ENCODE measurements at regions of chr22 and their contacts with region 1.

Region 1: GRCh38 chr22:46762238-46763050 is at the start of gene TBC1D22A:
- DNase-seq: peak; percentile 88 to 95 (median 92)
- H3K4me3 ChIP-seq: peak within 1 kb of the TSS; percentile 98
- H3K4me3 Mint-ChIP-seq: peak within 1 kb of the TSS; percentile 96 to 100 (median 99)
- H3K27ac ChIP-seq: peak within 1 kb of the TSS; percentile 99
- H3K27ac Mint-ChIP-seq: peak within 1 kb of the TSS; percentile 99 to 100 (median 100)
- H3K4me1 ChIP-seq: peaks cover 43% of the 10 kb centered on the region
- H3K4me1 Mint-ChIP-seq: peaks cover 48 to 73% (median 65%) of the 10 kb centered on the region in 3 donors
- H3K27me3 ChIP-seq: no peaks in the 10 kb centered on the region
- H3K27me3 Mint-ChIP-seq: no peaks in the 10 kb centered on the region
- total RNA-seq, gene TBC1D22A: 34.0 to 34.8 TPM

Region 2: DNA sequence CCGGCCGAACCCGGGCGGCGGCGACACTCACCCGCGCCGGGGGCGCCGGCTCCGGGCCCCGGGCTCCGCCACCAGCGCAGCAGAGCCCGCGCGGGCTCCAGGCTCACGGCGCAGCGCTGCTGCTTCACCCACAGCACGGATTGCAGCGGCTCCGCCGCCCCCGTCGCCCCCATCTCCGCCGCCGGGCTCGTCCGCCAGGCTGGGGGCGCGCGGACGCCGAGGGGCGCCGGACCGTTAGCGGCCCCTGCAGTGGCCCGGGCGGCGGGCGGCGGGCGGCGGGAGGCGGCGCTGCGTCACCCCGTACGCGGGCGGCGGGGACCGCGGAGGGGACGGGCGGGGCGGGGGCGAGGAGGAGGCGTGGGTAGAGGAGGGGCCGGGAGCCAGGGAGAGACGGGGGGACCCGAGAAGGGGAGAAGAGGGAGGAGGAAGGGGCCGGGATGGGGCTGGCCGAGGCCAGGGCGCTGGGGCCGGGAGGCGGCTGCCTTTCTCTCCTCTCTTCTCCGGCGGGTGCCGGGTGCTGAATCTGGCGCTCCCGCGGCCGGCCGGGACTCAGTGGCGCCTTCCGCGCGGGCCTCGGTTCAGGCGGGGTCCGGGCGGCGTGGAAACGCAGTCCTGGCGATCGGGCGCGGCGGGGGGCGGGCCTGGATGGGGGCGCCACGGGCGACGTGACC is 24.3 kb before region 1 on chr22 and contains the start of gene CERK:
- CTCF ChIA-PET with region 1: interaction called, 11 read pairs
- POLR2A ChIA-PET with region 1: interaction called, 20 read pairs
- DNase-seq: peak; percentile 58 to 75 (median 67)
- H3K4me3 ChIP-seq: peak within 1 kb of the TSS; percentile 76
- H3K4me3 Mint-ChIP-seq: peak within 1 kb of the TSS; percentile 95 to 100 (median 99)
- H3K27ac ChIP-seq: peak within 1 kb of the TSS; percentile 76
- H3K27ac Mint-ChIP-seq: peak within 1 kb of the TSS; percentile 97 to 100 (median 100)
- H3K4me1 ChIP-seq: peaks cover 43% of the 10 kb centered on the region
- H3K4me1 Mint-ChIP-seq: peaks cover 36 to 46% (median 37%) of the 10 kb centered on the region in 3 donors
- H3K27me3 ChIP-seq: no peaks in the 10 kb centered on the region
- H3K27me3 Mint-ChIP-seq: peaks cover 0 to 5% of the 10 kb centered on the region in 2 donors
- total RNA-seq, gene CERK: 64.3 to 64.5 TPM

Region 3: GRCh38 chr22:46748908-46749675 is 13.4 kb before region 1 on chr22:
- CTCF ChIA-PET with region 1: interaction called, 24 read pairs
- POLR2A ChIA-PET with region 1: interaction called, 23 read pairs
- DNase-seq: peak; percentile 45 to 83 (median 59)
- H3K4me3 ChIP-seq: peak overlapping the region; percentile 52
- H3K4me3 Mint-ChIP-seq: peak overlapping the region; percentile 32 to 86 (median 80)
- H3K27ac ChIP-seq: peak overlapping the region; percentile 36
- H3K27ac Mint-ChIP-seq: peak overlapping the region; percentile 94 to 98 (median 96)
- H3K4me1 ChIP-seq: peaks cover 27% of the 10 kb centered on the region
- H3K4me1 Mint-ChIP-seq: peaks cover 21 to 33% (median 26%) of the 10 kb centered on the region in 3 donors
- H3K27me3 ChIP-seq: no peaks in the 10 kb centered on the region
- H3K27me3 Mint-ChIP-seq: no peaks in the 10 kb centered on the region

Region 4: DNA sequence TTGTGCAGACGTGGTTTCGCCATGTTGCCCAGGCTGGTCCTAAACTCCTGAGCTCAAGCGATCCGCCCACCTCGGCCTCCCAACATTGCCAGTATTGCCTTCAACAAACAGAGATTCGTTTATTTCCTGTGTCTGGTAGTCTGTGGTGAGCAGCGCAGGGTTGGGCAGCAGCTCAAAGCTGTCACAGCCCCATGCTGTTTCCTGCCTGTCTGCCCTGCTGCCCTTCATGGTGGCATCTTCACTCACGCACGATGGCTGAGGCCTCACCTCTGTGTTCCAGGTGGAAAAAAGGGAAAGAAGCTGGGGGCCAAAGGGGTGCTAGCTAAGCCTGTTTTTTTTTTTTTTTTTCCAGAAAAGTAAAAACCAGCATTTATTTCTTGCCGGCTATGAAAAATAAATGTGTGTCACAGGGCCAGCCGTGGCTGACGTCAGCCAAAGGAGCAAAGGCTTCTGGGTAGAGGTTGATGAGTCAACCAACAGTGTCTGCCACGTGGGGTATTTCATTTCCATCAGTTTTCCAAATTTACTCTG is 28.8 kb after region 1 on chr22:
- CTCF ChIA-PET with region 1: interaction called, 38 read pairs
- POLR2A ChIA-PET with region 1: interaction called, 46 read pairs
- DNase-seq: peak; percentile 76 to 92 (median 89)
- H3K4me3 ChIP-seq: peak overlapping the region; percentile 33
- H3K4me3 Mint-ChIP-seq: peak overlapping the region; percentile 81 to 90 (median 87)
- H3K27ac ChIP-seq: peak overlapping the region; percentile 96
- H3K27ac Mint-ChIP-seq: peak overlapping the region; percentile 99 to 100 (median 100)
- H3K4me1 ChIP-seq: peaks cover 42% of the 10 kb centered on the region
- H3K4me1 Mint-ChIP-seq: peaks cover 46 to 65% (median 53%) of the 10 kb centered on the region in 3 donors
- H3K27me3 ChIP-seq: no peaks in the 10 kb centered on the region
- H3K27me3 Mint-ChIP-seq: no peaks in the 10 kb centered on the region

Measured in CD8-positive, alpha-beta memory T cell (primary cell).